Activated CD4-positive, alpha-beta T cell treated with anti-CD3 and anti-CD28 coated beads for 36 hours (primary cell): ENCODE measurements at regions of chr9 and their contacts with region 1.

Region 1: GRCh38 chr9:115591584-115591984 is 473.6 kb upstream of the TNC start:
- DNase-seq: peak; percentile 13
- ATAC-seq: no peak
- H3K4me3 Mint-ChIP-seq: no peak overlapping the region
- H3K27ac Mint-ChIP-seq: no peak overlapping the region
- H3K4me1 Mint-ChIP-seq: no peaks in the 10 kb centered on the region
- H3K27me3 Mint-ChIP-seq: peaks cover 15% of the 10 kb centered on the region

Region 2: GRCh38 chr9:115604831-115605483 is 13.4 kb after region 1 on chr9:
- CTCF ChIA-PET with region 1: interaction called, 23 read pairs
- POLR2A ChIA-PET with region 1: no interaction called
- intact Hi-C with region 1: no loop called
- DNase-seq: no peak
- ATAC-seq: no peak
- H3K4me3 Mint-ChIP-seq: no peak overlapping the region
- H3K27ac Mint-ChIP-seq: no peak overlapping the region
- H3K4me1 Mint-ChIP-seq: no peaks in the 10 kb centered on the region
- H3K27me3 Mint-ChIP-seq: peaks cover 2% of the 10 kb centered on the region

Region 3: GRCh38 chr9:116166710-116167385 is 575.3 kb after region 1 on chr9:
- CTCF ChIA-PET with region 1: no interaction called
- POLR2A ChIA-PET with region 1: no interaction called
- intact Hi-C with region 1: loop called (anchors 5 kb)
- DNase-seq: no peak
- ATAC-seq: no peak
- H3K4me3 Mint-ChIP-seq: no peak overlapping the region
- H3K27ac Mint-ChIP-seq: no peak overlapping the region
- H3K4me1 Mint-ChIP-seq: no peaks in the 10 kb centered on the region
- H3K27me3 Mint-ChIP-seq: no peaks in the 10 kb centered on the region

Region 4: GRCh38 chr9:116494815-116495634 is 903.4 kb after region 1 on chr9:
- CTCF ChIA-PET with region 1: no interaction called
- POLR2A ChIA-PET with region 1: no interaction called
- intact Hi-C with region 1: loop called (anchors 1 to 5 kb)
- DNase-seq: peak; percentile 62
- ATAC-seq: no peak
- H3K4me3 Mint-ChIP-seq: no peak overlapping the region
- H3K27ac Mint-ChIP-seq: no peak overlapping the region
- H3K4me1 Mint-ChIP-seq: no peaks in the 10 kb centered on the region
- H3K27me3 Mint-ChIP-seq: no peaks in the 10 kb centered on the region

Region 5: DNA sequence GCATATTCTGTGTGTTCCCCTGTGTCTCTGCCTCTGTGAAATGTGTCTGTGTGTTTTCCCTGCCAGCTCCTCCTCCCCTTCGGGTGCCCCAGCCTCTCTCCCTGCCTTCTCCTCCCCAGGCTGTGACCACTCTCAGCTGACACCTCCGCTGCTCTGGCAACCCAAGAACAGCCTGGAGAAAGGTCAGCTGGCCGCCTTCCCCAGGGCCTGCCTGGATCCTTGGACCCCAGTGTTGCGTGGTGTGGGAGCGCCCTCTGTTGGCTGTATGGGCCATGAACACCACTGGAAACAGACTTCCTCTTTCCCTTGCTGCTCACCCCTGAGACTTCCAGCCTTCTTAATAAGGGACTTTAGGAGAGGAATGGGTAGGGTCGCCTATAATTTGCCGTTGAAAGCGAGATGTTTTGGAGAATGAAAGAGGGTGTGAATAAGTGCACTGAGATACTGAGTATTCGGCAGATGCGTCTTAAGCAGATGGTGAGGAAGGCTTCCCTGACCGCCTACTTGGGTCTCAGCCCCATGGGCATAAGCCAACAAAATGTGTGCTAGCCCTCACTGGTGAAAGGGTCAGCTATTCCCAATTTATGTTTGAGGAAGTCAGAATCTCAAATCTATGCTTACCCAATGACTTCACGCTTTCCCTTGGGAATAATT is 980.6 kb after region 1 on chr9:
- CTCF ChIA-PET with region 1: interaction called, 7 read pairs
- POLR2A ChIA-PET with region 1: no interaction called
- intact Hi-C with region 1: loop called (anchors 1 to 5 kb)
- DNase-seq: peak; percentile 64
- ATAC-seq: no peak
- H3K4me3 Mint-ChIP-seq: no peak overlapping the region
- H3K27ac Mint-ChIP-seq: no peak overlapping the region
- H3K4me1 Mint-ChIP-seq: no peaks in the 10 kb centered on the region
- H3K27me3 Mint-ChIP-seq: no peaks in the 10 kb centered on the region

Region 6: DNA sequence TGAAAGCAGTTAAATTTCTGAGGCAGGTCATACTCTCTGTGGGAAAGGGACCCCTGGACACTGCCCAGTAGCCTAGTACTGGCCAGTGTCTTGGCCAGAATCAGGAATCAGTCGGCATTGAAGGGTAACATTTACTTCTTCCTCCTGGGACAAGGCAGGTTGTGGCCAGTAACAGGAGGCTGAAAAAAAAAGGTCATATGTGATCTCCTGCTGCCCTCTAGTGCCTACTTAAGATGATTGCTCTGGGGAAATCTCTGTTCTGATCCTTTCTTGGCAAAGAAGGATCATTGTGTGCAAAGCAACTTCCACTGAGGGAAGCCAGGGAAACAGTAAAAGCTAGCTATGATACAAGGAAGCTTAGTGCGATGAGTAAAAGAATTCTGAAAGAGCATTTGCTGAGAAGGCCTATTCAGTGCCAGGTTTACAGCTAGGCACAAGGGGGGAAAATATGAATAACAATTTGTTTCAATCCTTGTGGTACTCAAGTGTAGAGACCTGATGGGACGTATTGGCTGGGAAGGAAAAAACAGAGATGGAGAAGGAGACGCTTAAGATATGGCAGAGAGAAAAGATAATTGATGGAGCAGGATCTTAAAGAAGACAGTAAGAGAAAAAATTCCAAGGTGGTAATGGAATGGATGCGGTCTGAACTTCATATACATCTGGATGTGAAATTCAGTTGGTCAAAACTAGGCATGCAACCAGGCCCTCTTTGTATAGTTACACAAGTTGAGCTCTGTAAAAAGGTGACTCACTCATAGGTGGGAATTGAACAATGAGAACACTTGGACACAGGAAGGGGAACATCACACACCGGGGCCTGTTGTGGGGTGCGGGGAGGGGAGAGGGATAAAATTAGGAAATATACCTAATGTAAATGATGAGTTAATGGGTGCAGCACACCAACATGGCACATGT is 1069.7 kb after region 1 on chr9:
- CTCF ChIA-PET with region 1: no interaction called
- POLR2A ChIA-PET with region 1: no interaction called
- intact Hi-C with region 1: loop called in 1 of 2 experiments (anchors 2 kb)
- DNase-seq: no peak
- ATAC-seq: peak; percentile 58
- H3K4me3 Mint-ChIP-seq: no peak overlapping the region
- H3K27ac Mint-ChIP-seq: no peak overlapping the region
- H3K4me1 Mint-ChIP-seq: no peaks in the 10 kb centered on the region
- H3K27me3 Mint-ChIP-seq: no peaks in the 10 kb centered on the region

Region 7: DNA sequence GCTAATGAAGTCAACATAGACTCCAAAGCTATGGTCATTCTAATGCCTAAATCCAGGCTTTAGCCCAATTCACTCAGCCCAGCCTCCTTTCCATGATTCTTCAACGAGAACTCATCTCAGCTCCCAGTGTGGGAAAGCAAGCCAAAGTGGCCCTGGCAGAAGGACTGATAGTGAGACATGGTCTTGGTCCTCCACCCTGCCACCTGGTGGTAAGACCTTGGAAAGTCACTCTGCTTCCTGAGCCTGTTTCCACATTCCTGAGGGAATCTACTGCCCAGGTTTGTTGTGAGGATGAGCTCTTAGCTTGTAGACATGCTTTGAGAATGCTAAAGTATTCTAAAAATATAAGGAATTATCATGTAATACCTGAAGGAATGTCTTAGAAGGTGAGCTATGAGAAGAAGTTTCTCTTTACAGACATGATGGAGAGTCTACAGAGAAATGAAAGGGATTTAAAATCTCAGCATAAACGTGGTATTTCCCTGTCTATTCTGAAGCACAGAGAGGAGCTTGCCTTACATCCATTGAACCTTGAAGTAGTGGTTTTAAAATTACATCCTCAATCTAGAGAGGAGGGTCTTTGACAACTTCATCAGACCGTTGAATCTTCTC is 1269.0 kb after region 1 on chr9:
- CTCF ChIA-PET with region 1: interaction called, 3 read pairs
- POLR2A ChIA-PET with region 1: no interaction called
- intact Hi-C with region 1: loop called in 1 of 2 experiments (anchors 2 kb)
- DNase-seq: peak; percentile 47
- ATAC-seq: no peak
- H3K4me3 Mint-ChIP-seq: no peak overlapping the region
- H3K27ac Mint-ChIP-seq: no peak overlapping the region
- H3K4me1 Mint-ChIP-seq: no peaks in the 10 kb centered on the region
- H3K27me3 Mint-ChIP-seq: peaks cover 3% of the 10 kb centered on the region